ENCODE measurements at regions of chr7 and their contacts with region 1.

Region 1: GRCh38 chr7:8176370-8177081 is 85.4 kb downstream of the ICA1 start:
- DNase-seq: peak; percentile 79
- ATAC-seq: peak; percentile 86
- H3K4me3 ChIP-seq: peak overlapping the region in 4 of 5 experiments; percentile 3 to 55 (median 22)
- H3K4me3 Mint-ChIP-seq: peak overlapping the region; percentile 86
- H3K27ac ChIP-seq: peak overlapping the region; percentile 82 to 91
- H3K27ac Mint-ChIP-seq: peak overlapping the region; percentile 97
- H3K4me1 ChIP-seq: peaks cover 43 to 49% of the 10 kb centered on the region in 2 donors
- H3K4me1 Mint-ChIP-seq: peaks cover 56% of the 10 kb centered on the region
- H3K27me3 ChIP-seq: no peaks in the 10 kb centered on the region
- H3K27me3 Mint-ChIP-seq: no peaks in the 10 kb centered on the region
- CTCF ChIP-seq: no peak

Region 2: GRCh38 chr7:8125680-8126444 is 50.7 kb before region 1 on chr7:
- CTCF ChIA-PET with region 1: no interaction called
- POLR2A ChIA-PET with region 1: no interaction called
- intact Hi-C with region 1: loop called (anchors 2 kb)
- DNase-seq: peak; percentile 73
- ATAC-seq: peak; percentile 92
- H3K4me3 ChIP-seq: peak overlapping the region in 2 of 5 experiments; percentile 16 to 37
- H3K4me3 Mint-ChIP-seq: peak overlapping the region; percentile 69
- H3K27ac ChIP-seq: peak overlapping the region; percentile 58 to 74
- H3K27ac Mint-ChIP-seq: peak overlapping the region; percentile 95
- H3K4me1 ChIP-seq: peaks cover 18 to 33% of the 10 kb centered on the region in 2 donors
- H3K4me1 Mint-ChIP-seq: peaks cover 57% of the 10 kb centered on the region
- H3K27me3 ChIP-seq: no peaks in the 10 kb centered on the region
- H3K27me3 Mint-ChIP-seq: no peaks in the 10 kb centered on the region
- CTCF ChIP-seq: no peak

Measured in B cell (primary cell).